AG04450 (cell line): ENCODE measurements at regions of chr4 and their contacts with region 1.

Region 1: DNA sequence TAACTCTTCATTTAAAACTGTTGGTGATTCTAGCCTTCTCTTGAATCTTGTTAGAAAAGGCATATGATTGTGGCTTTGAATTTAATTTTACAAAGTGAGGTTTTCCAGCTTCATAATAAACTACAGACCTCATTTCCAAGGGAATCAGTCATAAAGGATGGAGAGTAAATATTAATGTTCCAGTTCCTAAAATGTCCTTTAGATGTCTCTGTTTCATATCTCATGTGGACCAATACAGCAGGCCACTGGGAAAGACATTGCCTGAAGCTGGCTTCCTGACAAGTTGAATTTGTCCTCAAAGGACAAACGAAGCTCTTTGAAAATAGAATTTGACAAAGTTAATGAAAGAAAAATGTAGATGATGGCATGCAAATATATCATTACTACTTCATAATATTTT is 125.4 kb downstream of the ZNF330 start:
- DNase-seq: peak; percentile 29
- H3K4me3 ChIP-seq: no peak overlapping the region
- H3K27ac ChIP-seq: no peak overlapping the region
- H3K27me3 ChIP-seq: no peaks in the 10 kb centered on the region
- CTCF ChIP-seq: peak; percentile 69

Region 2: DNA sequence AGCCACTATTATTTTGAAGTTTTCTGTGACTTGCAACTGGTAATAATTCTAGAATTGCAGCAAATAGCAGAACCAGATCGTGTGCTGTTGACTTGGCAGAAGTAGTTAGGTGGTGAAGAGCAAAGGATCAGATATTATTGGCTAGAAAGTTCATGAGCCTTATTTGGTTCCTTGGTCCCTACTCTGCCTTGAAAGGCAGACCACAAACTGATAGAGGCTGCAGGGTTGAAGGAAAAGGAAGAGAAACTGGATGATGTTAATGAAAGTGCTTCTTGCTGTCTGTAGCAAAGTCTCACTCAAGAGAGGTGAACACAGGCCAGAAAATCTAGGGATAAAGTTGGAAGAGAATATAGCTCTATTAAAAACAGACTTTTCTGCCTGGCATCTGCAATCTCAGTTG is 171.7 kb before region 1 on chr4:
- CTCF ChIA-PET with region 1: no interaction called
- POLR2A ChIA-PET with region 1: no interaction called
- DNase-seq: no peak
- H3K4me3 ChIP-seq: no peak overlapping the region
- H3K27ac ChIP-seq: no peak overlapping the region
- H3K27me3 ChIP-seq: peaks cover 4% of the 10 kb centered on the region
- CTCF ChIP-seq: no peak

Region 3: GRCh38 chr4:141307241-141307689 is 38.9 kb before region 1 on chr4:
- CTCF ChIA-PET with region 1: interaction called, 13 read pairs
- POLR2A ChIA-PET with region 1: no interaction called
- DNase-seq: peak; percentile 8
- H3K4me3 ChIP-seq: no peak overlapping the region
- H3K27ac ChIP-seq: no peak overlapping the region
- H3K27me3 ChIP-seq: no peaks in the 10 kb centered on the region
- CTCF ChIP-seq: peak; percentile 75

Region 4: DNA sequence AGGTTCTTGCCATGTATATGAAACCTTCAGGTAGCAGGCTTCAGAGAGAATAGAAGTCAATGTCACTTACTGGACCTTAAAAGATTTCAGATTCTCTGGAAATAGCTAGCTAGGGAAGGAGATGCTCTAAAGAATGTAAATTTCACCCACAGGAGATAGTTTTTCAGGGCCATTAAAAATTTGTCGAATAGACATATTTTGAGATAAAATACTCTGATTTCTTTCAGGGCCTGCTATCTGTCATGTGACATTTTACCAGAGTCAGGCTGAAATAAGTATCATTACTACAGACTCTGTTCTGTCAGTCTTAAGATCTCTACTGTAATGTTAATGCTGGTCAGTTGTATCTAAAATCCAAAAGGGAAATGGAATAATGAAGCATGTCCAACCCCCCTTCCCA is 274.6 kb after region 1 on chr4:
- CTCF ChIA-PET with region 1: interaction called, 10 read pairs
- POLR2A ChIA-PET with region 1: no interaction called
- DNase-seq: no peak
- H3K4me3 ChIP-seq: no peak overlapping the region
- H3K27ac ChIP-seq: no peak overlapping the region
- H3K27me3 ChIP-seq: no peaks in the 10 kb centered on the region
- CTCF ChIP-seq: no peak

Region 5: GRCh38 chr4:141636082-141636770 is 290.1 kb after region 1 on chr4 and contains the start of gene IL15:
- CTCF ChIA-PET with region 1: interaction called, 21 read pairs
- POLR2A ChIA-PET with region 1: interaction called, 3 read pairs
- DNase-seq: no peak
- H3K4me3 ChIP-seq: peak within 1 kb of the TSS; percentile 79
- H3K27ac ChIP-seq: peak within 1 kb of the TSS; percentile 63
- H3K27me3 ChIP-seq: no peaks in the 10 kb centered on the region
- CTCF ChIP-seq: no peak
- polyA plus RNA-seq, gene IL15: 7.6 and 10.9 TPM in 2 replicates

Region 6: GRCh38 chr4:141654098-141654497 is 308.0 kb after region 1 on chr4:
- CTCF ChIA-PET with region 1: interaction called, 23 read pairs
- POLR2A ChIA-PET with region 1: no interaction called
- DNase-seq: no peak
- H3K4me3 ChIP-seq: no peak overlapping the region
- H3K27ac ChIP-seq: no peak overlapping the region
- H3K27me3 ChIP-seq: no peaks in the 10 kb centered on the region
- CTCF ChIP-seq: peak; percentile 46

Region 7: GRCh38 chr4:141711014-141711610 is 365.0 kb after region 1 on chr4:
- CTCF ChIA-PET with region 1: interaction called, 19 read pairs
- POLR2A ChIA-PET with region 1: no interaction called
- DNase-seq: no peak
- H3K4me3 ChIP-seq: no peak overlapping the region
- H3K27ac ChIP-seq: no peak overlapping the region
- H3K27me3 ChIP-seq: no peaks in the 10 kb centered on the region
- CTCF ChIP-seq: peak; percentile 72

Region 8: DNA sequence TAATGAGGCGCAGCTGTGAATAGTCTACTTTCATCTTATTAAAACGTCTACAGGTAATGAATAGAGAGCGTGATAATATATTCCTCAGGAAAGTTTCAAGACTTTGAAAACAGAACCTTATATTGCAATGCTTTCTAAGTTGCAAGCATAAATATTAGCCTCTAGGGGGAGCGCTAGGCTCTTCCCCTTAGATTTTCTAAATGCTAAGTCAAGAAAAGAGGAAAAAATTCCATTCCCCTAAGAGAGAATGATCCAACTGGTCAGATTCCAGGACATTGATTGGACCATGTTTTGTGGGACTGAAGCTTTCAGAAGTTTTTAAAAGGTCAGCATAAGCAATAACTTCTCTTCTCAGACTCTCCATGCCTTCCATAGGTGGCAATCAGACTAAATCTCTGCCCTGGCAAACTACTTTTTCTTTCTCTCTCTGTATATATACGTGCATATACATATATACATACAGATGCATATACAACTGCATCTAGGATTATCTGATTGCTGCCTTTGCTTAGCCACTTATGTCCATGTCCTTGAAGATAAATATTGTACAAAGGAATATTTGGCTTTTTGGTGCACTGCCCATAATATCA is 1007.1 kb after region 1 on chr4:
- CTCF ChIA-PET with region 1: interaction called, 16 read pairs
- POLR2A ChIA-PET with region 1: no interaction called
- DNase-seq: peak; percentile 38
- H3K4me3 ChIP-seq: no peak overlapping the region
- H3K27ac ChIP-seq: no peak overlapping the region
- H3K27me3 ChIP-seq: no peaks in the 10 kb centered on the region
- CTCF ChIP-seq: peak; percentile 88

Region 9: GRCh38 chr4:142535009-142535408 is 1188.9 kb after region 1 on chr4:
- CTCF ChIA-PET with region 1: no interaction called
- POLR2A ChIA-PET with region 1: no interaction called
- DNase-seq: no peak
- H3K4me3 ChIP-seq: no peak overlapping the region
- H3K27ac ChIP-seq: no peak overlapping the region
- H3K27me3 ChIP-seq: no peaks in the 10 kb centered on the region
- CTCF ChIP-seq: no peak